HepG2 (cell line): ENCODE measurements at regions of chr12 and their contacts with region 1.

Region 1: GRCh38 chr12:56448860-56449621 is at the start of gene TIMELESS:
- DNase-seq: peak; percentile 82
- ATAC-seq: peak; percentile 96
- H3K4me3 ChIP-seq: peak within 1 kb of the TSS; percentile 68 to 96 (median 77)
- H3K27ac ChIP-seq: peak within 1 kb of the TSS; percentile 92
- H3K4me1 ChIP-seq: peaks cover 24% of the 10 kb centered on the region
- H3K27me3 ChIP-seq: no peaks in the 10 kb centered on the region
- CTCF ChIP-seq: peak; percentile 45
- EP300 ChIP-seq: no peak
- POLR2A ChIP-seq: peak; percentile 61 to 82
- RAD21 ChIP-seq: peak; percentile 47
- total RNA-seq, gene TIMELESS: 20.3 and 25.6 TPM in 2 replicates

Region 2: GRCh38 chr12:56258057-56258819 is 190.8 kb before region 1 on chr12 and contains the start of gene ANKRD52:
- CTCF ChIA-PET with region 1: no interaction called
- POLR2A ChIA-PET with region 1: no interaction called
- in situ Hi-C with region 1: no loop called
- intact Hi-C with region 1: no loop called
- DNase-seq: peak; percentile 26
- ATAC-seq: peak; percentile 92
- H3K4me3 ChIP-seq: peak within 1 kb of the TSS; percentile 74 to 96 (median 88)
- H3K27ac ChIP-seq: peak within 1 kb of the TSS; percentile 45
- H3K4me1 ChIP-seq: peaks cover 28% of the 10 kb centered on the region
- H3K27me3 ChIP-seq: no peaks in the 10 kb centered on the region
- CTCF ChIP-seq: peak; percentile 61
- EP300 ChIP-seq: no peak
- POLR2A ChIP-seq: peak in 1 of 2 experiments; percentile 47; a peak in 2 of 4 replicates
- RAD21 ChIP-seq: peak; percentile 84
- total RNA-seq, gene ANKRD52: 7.8 and 22.0 TPM in 2 replicates

Region 3: DNA sequence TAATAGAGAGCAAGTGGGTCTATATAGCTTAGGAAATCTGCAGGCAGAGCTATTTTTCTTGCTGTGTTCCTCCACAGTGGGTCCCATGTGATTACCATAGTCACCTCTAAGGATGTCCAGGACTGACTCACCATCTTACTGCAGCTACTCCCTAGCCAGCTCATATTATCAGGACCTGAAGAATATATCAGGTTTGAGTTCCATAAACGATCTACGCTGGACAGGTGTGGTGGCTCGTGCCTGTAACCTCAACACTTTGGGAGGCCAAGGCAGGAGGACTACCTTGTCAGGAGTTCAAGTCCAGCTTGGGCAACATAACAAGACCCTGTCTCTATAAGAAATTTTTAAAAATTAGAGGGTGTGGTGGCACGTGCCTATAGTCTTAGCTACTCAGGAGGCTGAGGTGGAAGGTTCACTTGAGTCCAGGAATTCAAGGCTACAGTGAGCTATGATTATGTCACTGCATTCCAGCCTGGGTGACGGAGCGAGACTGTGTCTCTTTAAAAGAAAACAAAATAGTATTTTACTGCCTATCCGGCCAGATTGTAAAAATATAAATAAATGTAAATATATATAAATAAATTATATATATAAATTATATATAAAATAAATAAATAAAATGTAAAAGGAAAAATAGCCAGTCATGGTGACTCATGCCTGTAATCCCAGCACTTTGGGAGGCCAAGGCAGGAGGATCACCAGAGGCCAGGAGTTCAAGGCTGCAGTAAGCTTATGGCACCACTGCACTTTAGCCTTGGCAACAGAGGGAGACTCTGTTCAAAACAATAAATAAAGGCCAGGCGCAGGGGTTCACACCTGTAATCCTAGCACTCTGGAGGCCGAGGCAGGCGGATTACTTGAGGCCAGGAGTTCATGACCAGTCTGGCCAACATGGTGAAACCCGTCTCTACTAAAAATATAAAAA is 12.5 kb after region 1 on chr12:
- CTCF ChIA-PET with region 1: no interaction called
- POLR2A ChIA-PET with region 1: interaction called, 17 read pairs
- in situ Hi-C with region 1: no loop called
- intact Hi-C with region 1: no loop called
- DNase-seq: peak; percentile 67
- ATAC-seq: no peak
- H3K4me3 ChIP-seq: no peak overlapping the region
- H3K27ac ChIP-seq: peak overlapping the region; percentile 54
- H3K4me1 ChIP-seq: peaks cover 62% of the 10 kb centered on the region
- H3K27me3 ChIP-seq: no peaks in the 10 kb centered on the region
- CTCF ChIP-seq: no peak
- EP300 ChIP-seq: peak; percentile 16 to 42; a peak in 1 of 4 replicates
- POLR2A ChIP-seq: no peak
- RAD21 ChIP-seq: no peak

Region 4: DNA sequence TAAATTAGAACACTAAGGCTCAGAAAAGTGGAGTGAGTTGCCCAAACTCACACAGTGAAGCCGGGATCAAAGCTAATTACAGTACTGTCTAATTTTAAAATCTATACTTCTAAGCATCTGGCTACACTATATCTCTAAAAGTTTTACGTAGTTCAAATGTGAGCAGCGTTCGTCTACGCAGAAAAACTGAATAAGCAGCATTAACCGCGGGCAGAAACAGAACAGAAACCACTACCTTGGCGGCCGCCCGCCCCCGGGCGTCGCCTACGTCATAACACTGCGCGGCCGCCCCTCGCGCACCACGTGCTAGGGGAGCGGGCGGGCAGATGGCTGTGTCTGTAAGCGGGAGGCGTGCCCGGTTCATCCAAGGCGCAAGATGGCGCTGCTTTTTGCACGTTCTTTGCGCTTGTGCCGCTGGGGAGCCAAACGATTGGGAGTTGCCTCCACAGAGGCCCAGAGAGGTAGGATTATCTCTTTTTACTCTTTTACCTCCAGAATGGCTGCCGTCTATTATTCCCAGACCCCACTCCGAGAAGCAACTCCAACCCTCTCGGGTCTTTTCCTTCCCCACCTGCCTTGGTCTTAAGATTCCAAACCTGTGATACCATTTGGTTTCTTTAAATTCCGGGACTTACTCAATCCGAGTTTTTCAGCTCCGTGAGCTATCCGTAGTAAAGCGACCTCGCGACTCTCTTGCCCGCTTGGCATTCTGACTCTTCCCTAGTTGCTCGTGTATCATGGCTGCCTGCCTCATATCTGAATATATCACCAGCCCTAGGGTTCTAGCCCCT is 19.4 kb after region 1 on chr12 and contains the start of gene SPRYD4:
- CTCF ChIA-PET with region 1: no interaction called
- POLR2A ChIA-PET with region 1: interaction called, 13 read pairs
- in situ Hi-C with region 1: no loop called
- intact Hi-C with region 1: no loop called
- DNase-seq: peak; percentile 82
- ATAC-seq: peak; percentile 92
- H3K4me3 ChIP-seq: peak within 1 kb of the TSS; percentile 79 to 93 (median 80)
- H3K27ac ChIP-seq: peak within 1 kb of the TSS; percentile 86
- H3K4me1 ChIP-seq: peaks cover 23% of the 10 kb centered on the region
- H3K27me3 ChIP-seq: no peaks in the 10 kb centered on the region; a peak in 1 of 5 replicates
- CTCF ChIP-seq: peak; percentile 90
- EP300 ChIP-seq: 0 out of 4 replicates have a peak, but pooled peaks of 1 of the 2 experiments have one; percentile 9
- POLR2A ChIP-seq: peak; percentile 90
- RAD21 ChIP-seq: peak; percentile 54; the same call in 1 of the 2 replicates
- total RNA-seq, gene SPRYD4: 4.1 and 4.5 TPM in 2 replicates